ENCODE measurements at regions of chr11 and their contacts with region 1.

Region 1: GRCh38 chr11:108654994-108655631 is 9.8 kb upstream of the DDX10 start:
- DNase-seq: peak; percentile 51
- H3K4me3 Mint-ChIP-seq: no peak overlapping the region
- H3K27ac Mint-ChIP-seq: no peak overlapping the region
- H3K4me1 Mint-ChIP-seq: no peaks in the 10 kb centered on the region
- H3K27me3 Mint-ChIP-seq: no peaks in the 10 kb centered on the region
- CTCF ChIP-seq: peak; percentile 32

Region 2: GRCh38 chr11:107689317-107690202 is 965.6 kb before region 1 on chr11:
- CTCF ChIA-PET with region 1: no interaction called
- intact Hi-C with region 1: no loop called
- DNase-seq: peak; percentile 62
- H3K4me3 Mint-ChIP-seq: no peak overlapping the region
- H3K27ac Mint-ChIP-seq: no peak overlapping the region
- H3K4me1 Mint-ChIP-seq: no peaks in the 10 kb centered on the region
- H3K27me3 Mint-ChIP-seq: no peaks in the 10 kb centered on the region
- CTCF ChIP-seq: no peak

Region 3: DNA sequence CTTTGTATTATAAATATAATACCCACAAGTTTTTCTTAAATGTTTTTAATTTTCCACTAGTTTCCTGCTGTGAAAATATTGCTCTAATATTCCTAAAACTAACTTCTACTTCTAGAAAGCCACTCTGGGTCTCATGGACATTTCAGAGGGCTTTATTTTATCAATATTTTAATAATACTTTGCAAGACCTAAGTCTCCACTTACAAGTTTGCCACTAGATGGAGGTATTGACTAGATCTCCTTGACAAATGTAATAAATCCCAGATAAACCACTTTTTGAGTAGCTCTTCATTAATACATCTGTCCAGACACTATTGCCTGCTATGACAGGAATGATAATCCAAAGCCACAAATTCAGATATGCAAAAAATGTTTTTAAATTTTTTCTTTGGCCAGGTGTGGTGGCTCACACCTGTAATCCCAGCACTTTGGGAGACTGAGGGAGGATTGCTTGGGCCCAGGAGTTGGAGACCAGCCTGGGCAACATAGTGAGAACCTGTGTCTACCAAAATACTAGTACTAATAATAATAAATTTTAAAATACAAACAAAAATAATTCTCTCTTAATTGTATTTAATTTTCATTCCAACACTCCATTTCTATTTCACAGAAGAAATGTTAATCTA is 537.3 kb before region 1 on chr11:
- CTCF ChIA-PET with region 1: no interaction called
- intact Hi-C with region 1: loop called (anchors 5 kb)
- DNase-seq: no peak
- H3K4me3 Mint-ChIP-seq: no peak overlapping the region
- H3K27ac Mint-ChIP-seq: no peak overlapping the region
- H3K4me1 Mint-ChIP-seq: peaks cover 22% of the 10 kb centered on the region
- H3K27me3 Mint-ChIP-seq: no peaks in the 10 kb centered on the region
- CTCF ChIP-seq: no peak

Region 4: GRCh38 chr11:108233277-108233945 is 421.7 kb before region 1 on chr11:
- CTCF ChIA-PET with region 1: no interaction called
- intact Hi-C with region 1: loop called (anchors 5 kb)
- DNase-seq: no peak
- H3K4me3 Mint-ChIP-seq: no peak overlapping the region
- H3K27ac Mint-ChIP-seq: no peak overlapping the region
- H3K4me1 Mint-ChIP-seq: peaks cover 10% of the 10 kb centered on the region
- H3K27me3 Mint-ChIP-seq: no peaks in the 10 kb centered on the region
- CTCF ChIP-seq: no peak

Region 5: GRCh38 chr11:108929241-108929640 is 274.1 kb after region 1 on chr11:
- CTCF ChIA-PET with region 1: no interaction called
- intact Hi-C with region 1: no loop called
- DNase-seq: no peak
- H3K4me3 Mint-ChIP-seq: no peak overlapping the region
- H3K27ac Mint-ChIP-seq: peak overlapping the region; percentile 45
- H3K4me1 Mint-ChIP-seq: peaks cover 9% of the 10 kb centered on the region
- H3K27me3 Mint-ChIP-seq: no peaks in the 10 kb centered on the region
- CTCF ChIP-seq: no peak

Measured in Calu3 (cell line).